Esophagus muscularis mucosa (tissue), 4 donors: ENCODE measurements at regions of chr1 and their contacts with region 1.

Region 1: DNA sequence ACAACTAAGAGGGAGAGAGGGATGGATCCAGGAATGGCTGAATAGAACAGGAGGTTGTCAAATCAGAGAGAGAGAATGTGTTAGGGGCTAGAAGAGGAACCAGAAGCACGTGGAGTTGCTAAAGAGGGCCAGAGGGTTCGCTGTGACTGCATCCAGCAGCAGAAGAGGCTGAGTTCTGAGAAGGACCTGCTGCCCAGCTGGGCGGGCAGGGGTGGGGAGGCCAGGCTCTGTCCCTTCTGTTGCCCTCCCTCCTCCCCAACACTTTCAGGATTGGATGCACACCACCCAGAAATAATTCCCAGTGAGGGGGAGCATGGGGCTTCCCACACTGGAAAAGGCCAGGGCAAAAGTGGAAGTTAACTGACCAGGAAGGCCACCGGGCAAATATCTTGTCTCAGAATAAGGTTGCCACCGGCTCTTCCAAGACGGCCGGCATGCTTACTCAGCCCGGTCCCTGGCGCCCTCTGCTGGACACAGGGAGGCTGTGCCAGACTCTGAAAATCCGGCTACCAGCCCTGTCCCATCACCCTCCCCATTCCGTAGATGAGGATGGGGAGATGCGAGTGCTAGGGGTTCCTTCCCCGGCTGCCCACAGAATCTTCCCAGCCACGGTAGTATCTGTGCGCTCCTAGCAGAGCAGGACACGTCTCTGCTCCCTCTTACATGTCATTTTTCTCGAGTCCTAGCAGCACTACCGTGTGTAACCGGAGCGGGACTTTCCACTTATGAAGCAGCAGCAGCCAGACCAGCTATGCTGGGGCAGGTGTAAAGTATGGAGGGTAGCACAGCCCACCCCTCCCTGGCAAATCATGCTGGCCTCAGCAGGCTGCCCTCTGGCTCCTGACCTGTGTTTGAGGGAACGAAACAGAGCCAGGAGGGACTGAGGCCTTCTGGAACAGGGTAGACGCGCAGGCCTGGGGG is 46.8 kb upstream of the A3GALT2 start:
- DNase-seq: no peak
- H3K4me3 ChIP-seq: peak overlapping the region in 1 of 4 donors; percentile 7
- H3K27ac ChIP-seq: peak overlapping the region; percentile 48 to 79 (median 66)
- H3K4me1 ChIP-seq: peaks cover 52 to 60% (median 56%) of the 10 kb centered on the region in 4 donors
- H3K27me3 ChIP-seq: no peaks in the 10 kb centered on the region
- CTCF ChIP-seq: peak; percentile 95 to 99 (median 98)
- EP300 ChIP-seq: no peak
- POLR2A ChIP-seq: no peak

Region 2: GRCh38 chr1:33219881-33220661 is 147.7 kb before region 1 on chr1:
- intact Hi-C with region 1: loop called (anchors 10 kb)
- DNase-seq: peak; percentile 47
- H3K4me3 ChIP-seq: no peak overlapping the region
- H3K27ac ChIP-seq: no peak overlapping the region
- H3K4me1 ChIP-seq: no peaks in the 10 kb centered on the region
- H3K27me3 ChIP-seq: no peaks in the 10 kb centered on the region
- CTCF ChIP-seq: no peak
- EP300 ChIP-seq: no peak
- POLR2A ChIP-seq: no peak

Region 3: GRCh38 chr1:33460947-33461629 is 93.3 kb after region 1 on chr1:
- intact Hi-C with region 1: no loop called
- DNase-seq: no peak
- H3K4me3 ChIP-seq: no peak overlapping the region
- H3K27ac ChIP-seq: peak overlapping the region; percentile 66 to 83 (median 76)
- H3K4me1 ChIP-seq: peaks cover 27 to 57% (median 45%) of the 10 kb centered on the region in 4 donors
- H3K27me3 ChIP-seq: no peaks in the 10 kb centered on the region
- CTCF ChIP-seq: no peak
- EP300 ChIP-seq: no peak
- POLR2A ChIP-seq: no peak

Region 4: DNA sequence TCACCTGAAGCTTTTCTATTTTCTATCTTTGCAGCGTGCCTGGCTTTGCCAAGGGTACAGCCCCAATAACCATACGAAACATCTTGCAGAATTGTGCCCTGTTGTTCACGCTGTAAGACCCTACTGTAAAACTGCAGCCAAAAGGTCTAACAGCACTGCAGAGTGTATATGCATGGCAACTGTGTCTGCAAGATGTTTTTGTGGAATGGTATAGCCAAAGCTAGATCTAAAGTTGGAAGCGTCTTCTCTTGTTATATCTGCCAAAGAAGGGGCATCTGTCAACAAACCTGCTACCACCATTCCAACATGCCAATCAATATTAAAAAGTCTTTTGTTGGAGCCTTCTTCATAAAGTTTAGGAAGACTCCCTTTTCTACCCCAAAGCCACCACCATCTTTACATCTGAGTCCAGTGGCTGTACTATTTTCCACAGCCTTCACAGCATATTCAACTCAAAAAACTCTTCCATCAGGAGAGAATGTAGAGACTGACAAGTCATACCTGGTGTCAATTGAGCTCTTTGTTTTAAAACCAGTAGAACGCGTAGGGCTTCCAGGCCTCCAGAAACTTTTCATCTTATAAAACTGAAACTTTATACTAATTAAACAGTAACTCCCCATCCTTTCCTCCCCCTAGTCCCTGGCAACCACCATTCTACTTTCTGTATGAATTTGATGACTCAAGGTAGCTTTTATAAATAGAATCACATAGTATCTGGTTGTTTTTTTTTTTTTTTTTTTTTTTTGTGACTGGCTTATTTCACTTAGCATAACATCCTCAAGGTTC is 144.7 kb after region 1 on chr1:
- intact Hi-C with region 1: no loop called
- DNase-seq: no peak
- H3K4me3 ChIP-seq: no peak overlapping the region
- H3K27ac ChIP-seq: no peak overlapping the region
- H3K4me1 ChIP-seq: peaks cover 0 to 3% (median 0%) of the 10 kb centered on the region in 4 donors
- H3K27me3 ChIP-seq: no peaks in the 10 kb centered on the region
- CTCF ChIP-seq: no peak
- EP300 ChIP-seq: no peak
- POLR2A ChIP-seq: no peak